ENCODE measurements at regions of chr1 and their contacts with region 1.

Region 1: GRCh38 chr1:45299981-45300668 is 26.6 kb upstream of the HPDL start:
- DNase-seq: peak in 4 of 5 donors; percentile 64 to 92 (median 76)
- H3K4me3 ChIP-seq: no peak overlapping the region
- H3K27ac ChIP-seq: no peak overlapping the region
- H3K4me1 ChIP-seq: peaks cover 0 to 10% (median 0%) of the 10 kb centered on the region in 3 donors
- H3K27me3 ChIP-seq: no peaks in the 10 kb centered on the region
- CTCF ChIP-seq: peak; percentile 82

Region 2: DNA sequence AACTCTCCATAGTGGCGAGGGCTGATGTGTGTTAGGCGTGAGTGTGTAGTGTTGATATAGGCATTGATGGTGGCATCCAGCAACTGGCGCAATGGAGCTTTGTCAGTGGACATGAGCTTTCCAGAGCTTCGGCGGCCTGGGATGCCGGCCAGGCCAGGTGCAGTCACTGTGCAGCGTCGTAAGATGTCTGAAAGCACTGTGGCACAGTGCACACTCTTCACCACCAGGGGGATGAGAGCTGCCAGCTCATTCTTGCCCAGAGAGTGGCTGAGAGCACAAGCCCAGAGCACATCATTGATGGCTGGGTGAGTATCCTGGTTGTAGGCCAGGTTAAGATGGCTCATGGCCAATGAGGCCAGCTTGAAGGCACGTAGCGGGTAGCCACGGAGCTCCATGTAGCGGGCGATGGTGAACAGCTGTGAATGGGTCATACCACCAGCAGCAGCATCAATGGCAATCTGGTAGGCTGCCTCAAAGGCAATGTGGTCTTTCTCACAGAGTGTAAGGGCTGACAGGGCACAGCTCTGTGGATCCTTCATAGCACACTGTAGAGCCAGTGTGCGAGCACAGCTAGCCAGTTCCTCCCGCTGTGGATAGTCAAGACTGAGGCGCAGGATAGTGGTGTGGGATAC is 281.4 kb before region 1 on chr1:
- intact Hi-C with region 1: loop called (anchors 5 kb)
- DNase-seq: peak in 4 of 5 donors; percentile 63 to 66 (median 64)
- H3K4me3 ChIP-seq: no peak overlapping the region
- H3K27ac ChIP-seq: no peak overlapping the region
- H3K4me1 ChIP-seq: peaks cover 0 to 5% (median 0%) of the 10 kb centered on the region in 3 donors
- H3K27me3 ChIP-seq: no peaks in the 10 kb centered on the region
- CTCF ChIP-seq: peak; percentile 81

Measured in kidney (tissue), 22 donors.